ENCODE measurements at regions of chr3 and their contacts with region 1.

Region 1: DNA sequence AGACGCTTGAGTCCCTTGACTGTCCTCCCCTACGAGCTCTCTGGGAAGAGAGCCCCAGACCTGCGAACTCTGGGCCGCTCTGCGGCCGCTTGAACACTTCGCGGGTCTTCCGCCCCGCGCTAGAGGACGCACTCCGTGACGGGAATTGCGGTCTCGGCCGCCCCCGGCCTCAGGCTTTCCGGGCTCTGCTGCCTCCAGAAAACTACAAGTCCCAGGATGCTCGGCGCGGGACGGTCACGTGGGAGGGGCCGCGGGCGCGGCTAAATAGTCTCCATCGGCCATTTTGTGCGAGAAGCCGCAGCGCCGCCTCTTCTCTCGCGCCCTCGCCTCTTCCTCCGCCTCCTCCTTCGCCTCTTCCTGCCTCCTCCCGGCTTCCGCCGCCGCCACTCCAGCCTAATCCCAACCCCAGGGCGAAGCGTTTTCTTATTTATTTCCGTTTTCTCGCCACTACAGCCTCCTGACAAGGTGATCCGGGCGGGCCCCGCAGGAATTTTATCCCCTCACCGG is at the start of gene EIF1B:
- DNase-seq: peak; percentile 96
- H3K4me3 ChIP-seq: peak within 1 kb of the TSS; percentile 70 to 100 (median 90)
- H3K27ac ChIP-seq: peak within 1 kb of the TSS; percentile 85
- H3K4me1 ChIP-seq: peaks cover 7% of the 10 kb centered on the region
- H3K27me3 ChIP-seq: no peaks in the 10 kb centered on the region
- CTCF ChIP-seq: peak; percentile 55 to 93
- total RNA-seq, gene EIF1B: 11.5 to 43.0 TPM

Region 2: GRCh38 chr3:40196966-40197365 is 112.5 kb before region 1 on chr3:
- CTCF ChIA-PET with region 1: interaction called, 10 read pairs
- dilution Hi-C with region 1: loop called (anchors 25 kb)
- in situ Hi-C with region 1: loop called in 1 of 2 experiments (anchors 5 kb)
- intact Hi-C with region 1: loop called (anchors 2 kb)
- DNase-seq: no peak
- H3K4me3 ChIP-seq: no peak overlapping the region
- H3K27ac ChIP-seq: no peak overlapping the region
- H3K4me1 ChIP-seq: no peaks in the 10 kb centered on the region
- H3K27me3 ChIP-seq: peaks cover 2% of the 10 kb centered on the region
- CTCF ChIP-seq: no peak

Region 3: DNA sequence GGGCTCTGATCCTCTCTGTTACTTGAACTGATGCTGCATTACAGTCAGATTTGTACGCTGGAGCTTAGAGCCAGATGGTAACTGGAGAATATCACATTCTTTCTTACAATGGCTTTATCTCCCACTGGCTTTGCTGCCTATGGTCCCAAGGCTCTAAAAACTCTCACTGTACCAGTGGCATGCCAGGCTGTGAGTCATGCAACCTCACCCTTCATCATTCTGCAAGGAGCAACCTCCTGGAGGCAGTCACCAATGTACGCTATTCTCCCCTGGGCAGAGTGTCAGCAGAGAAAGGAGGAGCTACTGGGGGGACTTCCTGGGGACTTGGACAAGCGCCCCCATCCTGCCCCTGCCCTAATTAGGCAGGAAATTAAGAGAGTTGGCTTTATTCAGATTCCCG is 97.9 kb before region 1 on chr3:
- CTCF ChIA-PET with region 1: no interaction called
- dilution Hi-C with region 1: loop called (anchors 25 kb)
- in situ Hi-C with region 1: no loop called
- intact Hi-C with region 1: no loop called
- DNase-seq: peak; percentile 48
- H3K4me3 ChIP-seq: no peak overlapping the region
- H3K27ac ChIP-seq: no peak overlapping the region
- H3K4me1 ChIP-seq: peaks cover 5% of the 10 kb centered on the region
- H3K27me3 ChIP-seq: no peaks in the 10 kb centered on the region
- CTCF ChIP-seq: no peak

Region 4: GRCh38 chr3:40229963-40230362 is 79.5 kb before region 1 on chr3:
- CTCF ChIA-PET with region 1: no interaction called
- dilution Hi-C with region 1: no loop called
- in situ Hi-C with region 1: no loop called
- intact Hi-C with region 1: no loop called
- DNase-seq: no peak
- H3K4me3 ChIP-seq: no peak overlapping the region
- H3K27ac ChIP-seq: no peak overlapping the region
- H3K4me1 ChIP-seq: no peaks in the 10 kb centered on the region
- H3K27me3 ChIP-seq: no peaks in the 10 kb centered on the region
- CTCF ChIP-seq: no peak

Region 5: DNA sequence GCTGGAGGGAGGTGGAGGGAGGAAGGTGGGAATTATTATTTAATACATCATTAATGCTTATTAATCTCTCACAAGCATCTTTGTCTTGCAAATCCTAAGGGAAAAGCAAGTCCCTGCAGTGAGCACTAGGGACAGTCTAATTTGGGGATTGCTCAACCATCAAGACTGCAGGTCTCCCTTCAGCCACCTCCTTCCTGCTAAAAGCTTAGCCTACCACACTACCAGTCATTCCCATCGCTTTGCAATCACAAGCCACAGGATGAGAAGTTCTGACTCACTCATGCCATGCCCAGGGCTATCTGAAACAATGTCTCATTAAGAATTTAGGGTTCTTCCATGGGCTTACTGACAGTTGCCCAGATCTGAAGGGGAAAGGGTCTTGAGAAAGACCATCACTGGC is 50.9 kb before region 1 on chr3:
- CTCF ChIA-PET with region 1: no interaction called
- dilution Hi-C with region 1: no loop called
- in situ Hi-C with region 1: no loop called
- intact Hi-C with region 1: loop called (anchors 1 kb)
- DNase-seq: peak; percentile 90
- H3K4me3 ChIP-seq: no peak overlapping the region
- H3K27ac ChIP-seq: no peak overlapping the region
- H3K4me1 ChIP-seq: peaks cover 10% of the 10 kb centered on the region
- H3K27me3 ChIP-seq: no peaks in the 10 kb centered on the region
- CTCF ChIP-seq: peak; percentile 56 to 70

Measured in mammary epithelial cell (primary cell).